H1 (cell line): ENCODE measurements at regions of chr4 and their contacts with region 1.

Region 1: GRCh38 chr4:128574706-128575105 is 234.8 kb upstream of the JADE1 start:
- DNase-seq: peak; percentile 81 to 94
- H3K4me3 ChIP-seq: no peak overlapping the region
- H3K27ac ChIP-seq: no peak overlapping the region
- H3K4me1 ChIP-seq: peaks cover 0 to 7% (median under 1%) of the 10 kb centered on the region in 4 experiments; a peak in 2 of 7 replicates
- H3K27me3 ChIP-seq: no peaks in the 10 kb centered on the region
- CTCF ChIP-seq: peak; percentile 64 to 84 (median 80)
- EP300 ChIP-seq: no peak
- POLR2A ChIP-seq: no peak
- RAD21 ChIP-seq: peak; percentile 92 to 96

Region 2: DNA sequence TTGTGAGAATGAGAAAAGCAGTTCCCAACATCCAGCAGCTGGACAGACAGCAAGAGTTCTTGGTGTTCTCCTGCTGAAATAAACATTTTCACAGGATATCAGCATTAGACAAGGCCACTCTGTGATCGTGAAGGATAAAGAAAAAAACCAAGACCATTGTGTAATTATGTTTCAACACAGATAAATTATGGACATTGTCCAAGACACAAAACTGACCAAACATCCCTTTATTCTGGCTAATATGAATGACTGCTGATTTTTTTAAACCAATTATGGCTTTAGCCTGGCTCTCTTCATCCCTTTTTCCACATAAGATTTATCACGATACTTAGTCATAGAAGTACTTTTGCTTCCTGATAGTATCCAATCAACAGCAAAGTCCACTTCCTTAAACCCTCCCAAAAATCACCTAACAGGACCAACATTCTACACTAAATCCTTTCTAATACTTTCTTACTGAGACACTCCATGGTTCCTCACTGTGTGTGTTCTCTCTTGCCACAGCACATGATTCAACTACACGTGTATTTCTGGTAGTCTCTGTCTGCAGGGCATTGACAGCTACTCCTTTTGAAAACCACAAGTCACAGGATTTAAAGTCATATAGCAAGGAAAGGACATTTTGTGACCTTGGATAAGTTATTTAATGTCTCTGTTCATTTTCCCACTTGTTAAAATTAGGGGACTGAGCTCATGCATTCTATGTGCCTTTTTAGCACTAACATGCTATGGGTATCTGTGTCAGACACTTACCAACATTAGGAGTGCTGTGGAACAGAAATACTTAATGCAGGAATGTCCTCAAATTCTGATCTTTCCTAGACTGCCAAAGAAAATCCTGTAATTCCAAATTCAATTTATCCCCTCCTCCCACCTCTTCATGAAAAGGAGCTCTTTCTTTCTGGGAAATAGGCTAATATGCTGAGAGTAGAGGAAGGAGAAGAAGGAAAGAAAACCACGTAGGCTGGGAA is 149.9 kb before region 1 on chr4:
- CTCF ChIA-PET with region 1: no interaction called
- POLR2A ChIA-PET with region 1: no interaction called
- DNase-seq: no peak
- H3K4me3 ChIP-seq: no peak overlapping the region
- H3K27ac ChIP-seq: no peak overlapping the region
- H3K4me1 ChIP-seq: no peaks in the 10 kb centered on the region
- H3K27me3 ChIP-seq: peaks cover 0 to 2% (median 0%) of the 10 kb centered on the region in 4 experiments; a peak in 1 of 7 replicates
- CTCF ChIP-seq: no peak
- EP300 ChIP-seq: no peak
- POLR2A ChIP-seq: no peak
- RAD21 ChIP-seq: no peak

Region 3: DNA sequence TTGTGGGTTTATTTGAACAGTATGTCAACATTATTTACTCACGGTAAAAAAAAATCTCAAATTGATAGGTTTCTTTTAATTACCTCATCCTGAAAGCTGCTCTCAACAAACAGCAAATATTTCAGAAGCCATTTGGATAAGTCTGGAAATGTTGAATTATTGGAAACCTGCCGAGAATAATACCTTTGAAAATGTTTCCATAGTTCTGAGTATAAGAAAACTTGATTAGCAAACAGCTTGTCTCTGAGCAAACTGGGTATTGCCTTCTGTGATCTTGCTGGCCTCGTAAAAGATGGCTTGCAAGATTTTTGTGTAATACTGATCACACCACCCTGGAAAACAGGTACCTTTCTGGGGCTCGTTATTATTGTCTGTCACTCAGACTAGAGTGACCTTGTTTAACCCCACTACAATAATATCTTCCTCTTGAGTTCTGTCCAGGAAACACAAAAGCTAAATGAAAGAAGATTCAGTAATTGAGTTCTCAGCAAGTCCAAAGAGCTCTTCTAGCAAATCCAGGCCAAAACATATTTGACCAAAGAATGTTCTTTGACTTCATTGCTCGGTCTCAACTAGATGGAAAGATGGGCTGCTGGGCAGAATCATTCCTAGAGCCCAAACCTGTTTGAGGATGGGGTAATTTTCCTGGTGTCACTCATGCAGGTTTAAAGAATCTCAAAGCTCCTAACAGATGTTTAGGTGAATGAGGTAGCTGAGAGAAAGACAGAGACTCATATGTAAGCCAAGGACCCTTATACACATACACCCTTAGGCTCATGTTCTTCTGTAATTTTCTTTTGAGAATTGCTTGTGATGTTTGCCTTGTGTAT is 20.8 kb before region 1 on chr4:
- CTCF ChIA-PET with region 1: interaction called, 13 read pairs
- POLR2A ChIA-PET with region 1: no interaction called
- DNase-seq: no peak
- H3K4me3 ChIP-seq: no peak overlapping the region
- H3K27ac ChIP-seq: no peak overlapping the region
- H3K4me1 ChIP-seq: peaks cover 0 to 2% (median 0%) of the 10 kb centered on the region in 4 experiments; a peak in 1 of 7 replicates
- H3K27me3 ChIP-seq: no peaks in the 10 kb centered on the region
- CTCF ChIP-seq: no peak
- EP300 ChIP-seq: no peak
- POLR2A ChIP-seq: no peak
- RAD21 ChIP-seq: no peak

Region 4: DNA sequence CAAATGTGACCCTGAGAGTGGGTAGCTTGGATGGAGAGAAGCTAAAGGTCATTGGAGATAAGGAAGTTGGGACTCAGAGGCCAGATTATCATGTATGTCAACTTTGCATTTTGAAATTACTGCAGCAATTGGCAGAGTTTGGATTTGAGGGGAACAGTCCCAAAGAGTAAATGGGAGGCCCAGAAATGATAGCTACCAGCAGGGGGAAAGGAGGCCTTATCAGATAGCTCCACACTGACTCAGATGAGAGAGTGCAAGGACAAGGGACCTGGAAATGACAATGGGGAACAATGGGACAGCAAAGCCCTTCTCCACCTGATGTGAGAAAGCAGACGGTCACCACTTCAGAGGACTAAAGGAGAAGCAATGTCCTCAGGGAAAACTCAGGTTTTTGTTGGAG is 33.3 kb after region 1 on chr4:
- CTCF ChIA-PET with region 1: interaction called, 10 read pairs
- POLR2A ChIA-PET with region 1: no interaction called
- DNase-seq: peak in 1 of 2 experiments; percentile 29
- H3K4me3 ChIP-seq: no peak overlapping the region
- H3K27ac ChIP-seq: no peak overlapping the region
- H3K4me1 ChIP-seq: peaks cover 0 to 2% (median 0%) of the 10 kb centered on the region in 4 experiments; a peak in 2 of 7 replicates
- H3K27me3 ChIP-seq: no peaks in the 10 kb centered on the region
- CTCF ChIP-seq: peak in 1 of 3 experiments; percentile 6; a peak in 1 of 4 replicates
- EP300 ChIP-seq: no peak
- POLR2A ChIP-seq: no peak
- RAD21 ChIP-seq: peak in 1 of 2 experiments; percentile 9; a peak in 1 of 4 replicates

Region 5: GRCh38 chr4:128803783-128804182 is 229.1 kb after region 1 on chr4:
- CTCF ChIA-PET with region 1: interaction called, 23 read pairs
- POLR2A ChIA-PET with region 1: interaction called, 8 read pairs
- DNase-seq: no peak
- H3K4me3 ChIP-seq: no peak overlapping the region
- H3K27ac ChIP-seq: peak overlapping the region; percentile 84; the same call in 1 of the 2 replicates
- H3K4me1 ChIP-seq: peaks cover 13 to 37% (median 29%) of the 10 kb centered on the region in 4 experiments
- H3K27me3 ChIP-seq: no peaks in the 10 kb centered on the region
- CTCF ChIP-seq: no peak
- EP300 ChIP-seq: no peak
- POLR2A ChIP-seq: no peak
- RAD21 ChIP-seq: no peak

Region 6: DNA sequence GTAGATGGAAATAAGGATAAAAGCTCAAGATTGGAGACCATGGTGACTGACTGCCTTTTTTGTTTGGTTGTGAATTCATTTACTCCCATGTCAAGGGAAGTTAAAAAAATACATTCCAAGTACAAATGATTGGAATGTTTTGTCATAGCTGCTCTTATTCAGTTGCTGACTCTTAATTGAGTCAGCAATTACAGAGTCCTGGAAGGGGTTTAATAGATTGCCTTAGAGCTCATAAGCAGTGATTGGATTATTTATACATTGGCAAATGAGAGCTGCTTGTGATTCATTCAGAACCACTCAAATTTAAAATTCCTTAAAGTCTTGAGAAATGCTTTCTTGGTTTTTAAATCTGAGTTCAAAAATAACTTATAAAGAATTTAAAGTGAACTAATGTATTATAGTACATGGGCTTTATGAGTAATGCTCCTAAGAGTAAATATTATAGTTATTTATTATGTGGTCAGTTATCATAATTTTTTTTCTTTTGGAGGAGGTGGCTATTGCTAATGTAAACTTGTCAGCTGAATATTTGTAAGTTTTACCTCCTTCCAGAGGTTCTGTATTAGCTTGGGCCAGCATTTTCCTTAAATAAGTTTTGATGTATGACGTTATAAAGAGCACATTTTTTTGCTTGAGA is 248.4 kb after region 1 on chr4:
- CTCF ChIA-PET with region 1: interaction called, 11 read pairs
- POLR2A ChIA-PET with region 1: interaction called, 4 read pairs
- DNase-seq: no peak
- H3K4me3 ChIP-seq: no peak overlapping the region
- H3K27ac ChIP-seq: no peak overlapping the region
- H3K4me1 ChIP-seq: peaks cover 6 to 37% (median 24%) of the 10 kb centered on the region in 4 experiments
- H3K27me3 ChIP-seq: no peaks in the 10 kb centered on the region
- CTCF ChIP-seq: no peak
- EP300 ChIP-seq: no peak
- POLR2A ChIP-seq: no peak
- RAD21 ChIP-seq: no peak